ENCODE measurements at regions of chr9 and their contacts with region 1.

Region 1: GRCh38 chr9:25891527-25891926 is 213.3 kb upstream of the TUSC1 start:
- DNase-seq: no peak
- H3K4me3 Mint-ChIP-seq: no peak overlapping the region
- H3K27ac Mint-ChIP-seq: no peak overlapping the region
- H3K4me1 Mint-ChIP-seq: no peaks in the 10 kb centered on the region
- H3K27me3 Mint-ChIP-seq: no peaks in the 10 kb centered on the region

Region 2: DNA sequence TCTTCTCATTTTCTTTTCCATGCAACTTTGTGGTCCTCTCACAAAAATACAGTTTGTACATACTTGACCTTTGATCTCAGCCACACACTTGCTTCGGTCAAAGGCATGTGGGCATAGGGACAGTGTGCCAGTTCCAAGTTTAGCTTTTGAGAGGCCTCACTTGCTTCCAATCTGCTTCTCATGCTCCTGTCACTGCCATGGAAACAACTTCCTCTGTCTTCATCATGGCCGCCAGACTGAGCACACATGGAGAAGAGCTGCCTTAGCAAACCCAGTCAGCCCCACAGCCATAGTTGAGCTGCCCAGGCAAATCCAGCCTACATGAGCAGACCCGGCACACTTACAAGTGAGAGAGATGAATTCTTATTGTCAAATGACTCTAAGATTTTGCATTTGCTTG is 75.1 kb before region 1 on chr9:
- CTCF ChIA-PET with region 1: no interaction called
- POLR2A ChIA-PET with region 1: no interaction called
- intact Hi-C with region 1: no loop called
- DNase-seq: no peak
- H3K4me3 Mint-ChIP-seq: no peak overlapping the region
- H3K27ac Mint-ChIP-seq: no peak overlapping the region
- H3K4me1 Mint-ChIP-seq: no peaks in the 10 kb centered on the region
- H3K27me3 Mint-ChIP-seq: no peaks in the 10 kb centered on the region

Region 3: GRCh38 chr9:25827626-25828025 is 63.9 kb before region 1 on chr9:
- CTCF ChIA-PET with region 1: no interaction called
- POLR2A ChIA-PET with region 1: no interaction called
- intact Hi-C with region 1: no loop called
- DNase-seq: no peak
- H3K4me3 Mint-ChIP-seq: no peak overlapping the region
- H3K27ac Mint-ChIP-seq: no peak overlapping the region
- H3K4me1 Mint-ChIP-seq: no peaks in the 10 kb centered on the region
- H3K27me3 Mint-ChIP-seq: no peaks in the 10 kb centered on the region

Region 4: GRCh38 chr9:25876248-25876647 is 15.3 kb before region 1 on chr9:
- CTCF ChIA-PET with region 1: no interaction called
- POLR2A ChIA-PET with region 1: no interaction called
- intact Hi-C with region 1: loop called (anchors 2 kb)
- DNase-seq: no peak
- H3K4me3 Mint-ChIP-seq: no peak overlapping the region
- H3K27ac Mint-ChIP-seq: no peak overlapping the region
- H3K4me1 Mint-ChIP-seq: no peaks in the 10 kb centered on the region
- H3K27me3 Mint-ChIP-seq: no peaks in the 10 kb centered on the region

Region 5: DNA sequence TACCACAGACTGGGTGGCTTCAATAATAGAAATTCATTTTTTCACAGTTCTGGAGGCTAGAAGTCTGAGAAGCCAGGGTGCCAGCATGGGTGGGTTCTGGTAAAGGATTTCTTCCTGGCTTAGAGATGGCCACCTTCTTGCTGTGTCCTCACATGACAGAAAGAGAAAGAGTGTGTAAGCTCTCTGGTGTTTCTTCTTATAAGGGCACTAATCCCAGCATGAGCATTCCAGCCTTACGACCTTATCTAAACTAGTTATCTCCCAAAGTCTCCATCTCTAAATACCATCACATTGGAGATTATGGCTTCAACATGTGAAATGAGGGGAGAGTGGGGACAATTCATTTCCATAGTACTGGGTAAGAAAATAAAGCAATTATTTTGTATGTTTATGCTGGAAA is 13.2 kb after region 1 on chr9:
- CTCF ChIA-PET with region 1: no interaction called
- POLR2A ChIA-PET with region 1: no interaction called
- intact Hi-C with region 1: no loop called
- DNase-seq: no peak
- H3K4me3 Mint-ChIP-seq: no peak overlapping the region
- H3K27ac Mint-ChIP-seq: no peak overlapping the region
- H3K4me1 Mint-ChIP-seq: no peaks in the 10 kb centered on the region
- H3K27me3 Mint-ChIP-seq: no peaks in the 10 kb centered on the region

Region 6: DNA sequence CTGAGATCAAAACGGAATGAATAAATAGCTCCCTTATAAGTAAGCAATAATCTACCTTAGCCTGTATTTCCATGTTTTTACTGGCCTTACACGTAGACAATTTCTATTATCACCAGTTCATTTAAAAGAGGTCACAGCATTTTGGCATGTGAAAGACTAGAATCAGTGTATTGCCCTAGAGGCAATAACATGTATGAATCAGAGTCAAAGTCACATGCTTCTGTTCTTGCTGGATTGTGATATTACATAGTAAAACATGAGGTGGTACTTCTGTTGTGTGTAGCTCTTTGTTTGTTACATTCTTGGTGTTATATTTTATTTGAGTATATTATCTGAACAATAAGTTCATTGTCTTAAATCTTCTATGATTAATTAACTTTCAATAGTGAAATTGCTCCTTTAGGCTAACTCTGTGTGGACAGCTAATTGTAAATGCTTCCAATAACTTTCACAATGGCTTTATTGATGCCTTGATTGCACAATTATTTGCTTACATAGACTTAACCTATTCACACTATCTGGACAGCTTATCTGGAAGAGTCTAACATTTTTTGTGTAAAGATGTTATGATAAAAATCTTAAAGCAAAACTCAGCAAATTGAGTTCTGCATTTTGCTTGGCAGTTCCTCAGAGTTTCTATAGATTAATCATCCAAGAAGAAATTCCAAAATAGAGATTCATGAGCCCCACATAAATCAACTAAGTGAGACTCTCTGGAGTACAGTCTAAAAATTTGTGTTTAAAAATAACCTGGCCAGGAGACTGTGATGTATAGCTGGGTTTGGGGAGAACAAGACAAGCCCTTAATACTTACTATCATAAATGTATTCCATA is 26.3 kb after region 1 on chr9:
- CTCF ChIA-PET with region 1: no interaction called
- POLR2A ChIA-PET with region 1: no interaction called
- intact Hi-C with region 1: no loop called
- DNase-seq: no peak
- H3K4me3 Mint-ChIP-seq: no peak overlapping the region
- H3K27ac Mint-ChIP-seq: no peak overlapping the region
- H3K4me1 Mint-ChIP-seq: no peaks in the 10 kb centered on the region
- H3K27me3 Mint-ChIP-seq: no peaks in the 10 kb centered on the region

Measured in activated CD4-positive, alpha-beta memory T cell treated with anti-CD3 and anti-CD28 coated beads for 36 hours (primary cell).